Ascending aorta (tissue), 2 donors: ENCODE measurements at regions of chrX and their contacts with region 1.

Region 1: DNA sequence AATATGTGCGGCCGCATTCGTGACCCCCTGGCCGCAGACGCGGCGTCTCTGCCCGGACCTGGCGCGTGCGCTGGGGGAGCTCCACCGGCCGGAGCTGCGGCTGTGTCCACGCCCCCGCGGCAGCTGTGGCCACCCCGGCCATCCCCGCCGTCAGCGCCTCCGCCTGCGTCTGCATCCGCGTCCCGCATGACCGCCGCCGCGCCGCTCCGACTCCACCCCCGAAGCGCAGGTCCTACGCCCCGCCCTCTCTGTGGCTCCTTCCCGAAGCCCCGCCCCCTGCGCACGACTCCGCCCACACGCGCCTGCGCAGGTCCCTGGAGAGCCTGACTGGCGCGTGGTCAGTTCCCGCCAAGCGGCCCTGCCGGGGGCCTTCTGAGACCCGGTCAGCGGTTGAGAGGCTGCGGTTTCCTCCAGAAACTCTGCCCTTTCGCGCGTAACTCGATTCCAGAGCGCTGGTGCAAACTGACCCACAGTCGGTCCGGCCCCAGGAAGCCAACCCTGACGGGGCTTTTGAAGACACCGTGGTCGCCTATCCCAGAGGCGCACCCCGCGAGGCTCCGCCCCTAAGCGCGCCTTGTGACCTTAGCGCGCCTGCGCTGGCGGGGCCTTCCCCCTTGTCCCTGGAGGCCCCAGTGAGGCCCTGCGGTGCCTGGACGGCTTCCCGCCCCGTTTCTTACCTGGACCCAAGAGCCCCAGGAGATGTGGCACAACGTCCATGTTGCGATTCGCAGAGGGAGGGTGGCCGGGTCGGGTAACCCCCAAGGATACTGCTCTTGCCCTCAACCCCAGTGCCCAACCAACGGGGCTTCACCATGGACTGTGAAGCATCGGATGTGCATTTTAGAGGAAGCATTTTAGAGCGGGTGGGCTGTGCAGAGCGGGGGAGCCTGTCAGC is at the start of gene LAGE3:
- DNase-seq: peak; percentile 76 to 95
- H3K4me3 ChIP-seq: peak within 1 kb of the TSS; percentile 57 to 69
- H3K27ac ChIP-seq: peak within 1 kb of the TSS; percentile 73 to 76
- H3K4me1 ChIP-seq: no peaks in the 10 kb centered on the region
- H3K27me3 ChIP-seq: no peaks in the 10 kb centered on the region
- CTCF ChIP-seq: no peak
- total RNA-seq, gene LAGE3: 52.0 TPM

Region 2: DNA sequence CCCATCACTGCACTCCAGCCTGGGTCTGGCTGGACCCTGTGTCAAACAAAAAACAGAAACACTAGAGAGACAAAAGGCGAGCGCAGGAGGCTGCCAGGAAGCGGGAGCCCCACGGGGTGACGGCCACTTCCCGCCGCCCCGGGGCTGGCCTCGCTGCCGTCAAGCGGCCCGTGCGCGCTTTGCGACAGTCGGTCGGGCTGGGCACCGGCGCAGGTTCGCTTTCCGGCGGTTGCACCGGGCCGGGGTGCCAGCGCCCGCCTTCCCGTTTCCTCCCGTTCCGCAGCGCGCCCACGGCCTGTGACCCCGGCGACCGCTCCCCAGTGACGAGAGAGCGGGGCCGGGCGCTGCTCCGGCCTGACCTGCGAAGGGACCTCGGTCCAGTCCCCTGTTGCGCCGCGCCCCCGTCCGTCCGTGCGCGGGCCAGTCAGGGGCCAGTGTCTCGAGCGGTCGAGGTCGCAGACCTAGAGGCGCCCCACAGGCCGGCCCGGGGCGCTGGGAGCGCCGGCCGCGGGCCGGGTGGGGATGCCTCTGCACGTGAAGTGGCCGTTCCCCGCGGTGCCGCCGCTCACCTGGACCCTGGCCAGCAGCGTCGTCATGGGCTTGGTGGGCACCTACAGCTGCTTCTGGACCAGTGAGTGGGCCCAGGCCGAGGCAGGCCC is 67.5 kb before region 1 on chrX and contains the start of gene TAFAZZIN:
- intact Hi-C with region 1: loop called (anchors 5 kb)
- DNase-seq: peak in 1 of 2 donors; percentile 81
- H3K4me3 ChIP-seq: peak within 1 kb of the TSS; percentile 60 to 82
- H3K27ac ChIP-seq: peak within 1 kb of the TSS; percentile 89 to 91
- H3K4me1 ChIP-seq: peaks cover 0 to 9% of the 10 kb centered on the region in 2 donors
- H3K27me3 ChIP-seq: no peaks in the 10 kb centered on the region
- CTCF ChIP-seq: no peak
- total RNA-seq, gene TAFAZZIN: 33.4 TPM

Region 3: GRCh38 chrX:154428176-154429010 is 50.6 kb before region 1 on chrX and contains the start of gene ATP6AP1:
- intact Hi-C with region 1: loop called (anchors 1 kb)
- DNase-seq: peak; percentile 78 to 95
- H3K4me3 ChIP-seq: peak within 1 kb of the TSS; percentile 43 to 86
- H3K27ac ChIP-seq: peak within 1 kb of the TSS; percentile 59 to 83
- H3K4me1 ChIP-seq: peaks cover 2 to 8% of the 10 kb centered on the region in 2 donors
- H3K27me3 ChIP-seq: no peaks in the 10 kb centered on the region
- CTCF ChIP-seq: no peak
- total RNA-seq, gene ATP6AP1: 52.6 TPM

Region 4: GRCh38 chrX:154443992-154444754 is 34.8 kb before region 1 on chrX and contains the start of gene FAM50A:
- intact Hi-C with region 1: loop called (anchors 5 kb)
- DNase-seq: peak in 1 of 2 donors; percentile 85
- H3K4me3 ChIP-seq: peak within 1 kb of the TSS; percentile 77 to 85
- H3K27ac ChIP-seq: peak within 1 kb of the TSS; percentile 80 to 83
- H3K4me1 ChIP-seq: peaks cover 0 to 13% of the 10 kb centered on the region in 2 donors
- H3K27me3 ChIP-seq: no peaks in the 10 kb centered on the region
- CTCF ChIP-seq: peak in 1 of 3 experiments; percentile 26
- total RNA-seq, gene FAM50A: 52.4 TPM

Region 5: DNA sequence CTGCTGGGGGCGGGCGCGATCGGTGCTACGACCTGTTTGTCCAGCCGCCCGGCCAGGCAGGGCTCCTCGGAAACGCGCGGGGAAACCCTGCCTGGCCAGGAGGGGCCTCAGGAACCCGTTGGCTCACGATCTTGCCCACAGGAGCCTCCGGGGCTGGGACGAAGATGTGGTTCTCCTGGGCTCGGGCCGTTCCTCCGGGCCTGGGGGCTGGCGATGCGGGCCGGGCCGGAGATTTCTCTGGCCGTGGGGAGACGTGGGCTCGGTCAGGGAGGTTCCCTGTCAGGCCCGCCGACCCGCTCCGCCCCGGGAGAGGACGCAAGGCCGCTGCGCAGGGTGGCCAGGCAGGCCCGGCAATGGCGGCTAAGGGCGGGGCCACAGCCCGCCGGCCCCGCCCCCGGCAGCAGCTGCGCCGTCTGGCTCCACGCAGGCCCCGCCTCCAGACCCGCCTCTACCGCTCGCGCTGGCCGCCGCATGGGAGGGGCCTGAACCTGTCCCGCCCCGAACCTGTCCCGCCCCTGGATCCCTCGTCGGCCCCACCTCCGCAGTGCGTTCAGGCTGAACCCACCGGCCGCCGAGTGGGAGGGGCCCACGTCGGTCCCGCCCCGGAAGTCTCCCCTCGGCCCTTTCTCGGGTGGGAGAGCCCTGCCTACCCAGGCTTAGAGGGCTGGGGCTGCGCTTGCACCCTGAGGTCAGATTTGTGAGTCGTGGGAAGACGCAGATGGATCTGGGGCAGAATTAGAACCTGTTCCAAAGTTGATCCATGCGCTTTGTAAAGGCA is 37.1 kb after region 1 on chrX and contains the start of gene FAM3A:
- intact Hi-C with region 1: loop called (anchors 1 kb)
- DNase-seq: peak; percentile 70 to 95
- H3K4me3 ChIP-seq: peak within 1 kb of the TSS; percentile 64 to 72
- H3K27ac ChIP-seq: peak within 1 kb of the TSS; percentile 82 to 88
- H3K4me1 ChIP-seq: peaks cover 2 to 5% of the 10 kb centered on the region in 2 donors
- H3K27me3 ChIP-seq: no peaks in the 10 kb centered on the region
- CTCF ChIP-seq: no peak
- total RNA-seq, gene FAM3A: 69.9 TPM